ENCODE measurements at regions of chrX and their contacts with region 1.

Region 1: DNA sequence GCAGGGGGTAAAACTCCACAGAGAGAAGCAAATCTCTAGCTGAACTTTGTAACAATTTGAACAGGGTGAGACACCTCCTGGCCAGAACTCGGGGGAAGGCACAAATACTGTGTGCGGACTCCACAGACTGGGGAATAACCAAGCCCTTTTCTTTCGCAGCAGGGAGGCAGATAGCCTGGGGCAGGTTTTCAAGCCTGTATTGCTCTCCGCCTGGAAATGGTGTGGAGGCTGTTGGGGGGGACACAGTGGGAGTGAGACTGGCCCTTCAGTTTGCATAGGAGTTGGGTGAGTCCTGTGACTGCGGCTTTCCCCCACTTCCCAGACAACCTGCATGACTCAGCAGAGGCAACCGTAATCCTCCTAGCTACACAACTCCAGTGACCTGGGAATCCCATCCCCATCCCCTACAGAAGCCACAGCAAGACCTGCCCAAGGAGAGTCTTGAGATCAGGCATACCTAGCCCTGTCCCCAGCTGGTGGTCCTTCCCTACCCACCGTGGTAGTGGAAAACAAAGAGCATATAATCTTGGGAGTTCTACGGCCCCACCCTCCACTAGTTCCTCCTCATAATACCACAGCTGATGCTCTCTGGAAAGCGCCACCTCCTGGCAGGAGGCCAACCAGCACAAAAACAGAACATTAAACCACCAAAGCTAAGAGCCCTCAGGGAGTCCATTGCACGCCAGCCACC is 12.9 kb upstream of the SMPX start:
- DNase-seq: no peak
- H3K4me3 ChIP-seq: no peak overlapping the region
- H3K27ac ChIP-seq: no peak overlapping the region
- H3K4me1 ChIP-seq: no peaks in the 10 kb centered on the region
- CTCF ChIP-seq: peak; percentile 41; the same call in 1 of the 2 replicates

Region 2: DNA sequence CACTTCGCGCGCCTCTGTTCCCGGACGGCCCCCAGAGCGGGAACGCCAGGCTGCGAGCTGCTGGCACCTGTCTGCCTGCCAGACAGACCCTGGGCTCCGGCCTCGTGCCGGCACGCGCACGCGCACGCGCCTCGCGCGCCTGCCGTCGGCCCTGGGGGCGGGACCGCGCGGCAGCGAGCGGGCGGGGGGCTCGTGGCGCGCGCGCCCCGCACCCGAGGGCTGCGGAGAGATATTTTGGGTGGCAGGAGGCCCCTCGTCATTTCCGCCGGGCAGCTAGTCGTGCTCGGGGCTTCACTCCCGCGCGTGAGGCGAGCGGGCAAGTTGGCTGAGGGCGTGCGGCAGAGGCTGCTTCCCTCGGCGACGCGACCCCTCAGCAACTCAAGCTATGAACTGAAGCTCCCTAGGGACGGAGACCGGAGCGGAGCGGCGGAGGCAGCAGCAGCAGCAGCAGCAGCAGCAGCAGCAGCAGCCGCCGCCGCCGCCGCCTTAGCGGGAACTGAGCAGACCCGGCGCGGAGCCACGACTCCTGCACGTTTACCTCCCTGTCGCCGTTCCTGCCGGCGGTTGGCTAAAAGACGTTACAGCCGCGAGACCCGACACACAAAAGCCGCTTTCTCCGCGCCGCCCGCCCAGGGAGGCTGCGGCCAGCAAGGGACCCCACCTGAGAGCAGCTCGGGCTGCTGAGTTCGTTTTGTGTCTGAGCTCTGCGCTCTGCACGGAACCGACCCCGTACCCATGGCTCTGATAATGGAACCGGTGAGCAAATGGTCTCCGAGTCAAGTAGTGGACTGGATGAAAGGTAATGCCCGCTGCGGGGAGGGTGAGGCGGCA is 396.4 kb before region 1 on chrX and contains the start of gene CNKSR2:
- CTCF ChIA-PET with region 1: no interaction called
- POLR2A ChIA-PET with region 1: no interaction called
- intact Hi-C with region 1: no loop called
- DNase-seq: no peak
- H3K4me3 ChIP-seq: no peak within 1 kb of the TSS
- H3K27ac ChIP-seq: no peak within 1 kb of the TSS
- H3K4me1 ChIP-seq: no peaks in the 10 kb centered on the region
- CTCF ChIP-seq: no peak
- total RNA-seq, gene CNKSR2: not detected in 2 replicates

Region 3: GRCh38 chrX:21926527-21927278 is 155.9 kb after region 1 on chrX:
- CTCF ChIA-PET with region 1: no interaction called
- POLR2A ChIA-PET with region 1: interaction called, 10 read pairs
- intact Hi-C with region 1: no loop called
- DNase-seq: no peak
- H3K4me3 ChIP-seq: no peak overlapping the region
- H3K27ac ChIP-seq: no peak overlapping the region
- H3K4me1 ChIP-seq: no peaks in the 10 kb centered on the region
- CTCF ChIP-seq: no peak

Measured in OCI-LY7 (cell line).